RWPE1 (cell line): ENCODE measurements at regions of chr5 and their contacts with region 1.

Region 1: GRCh38 chr5:178058321-178059012 is 54.9 kb upstream of the N4BP3 start:
- DNase-seq: no peak
- H3K27ac ChIP-seq: no peak overlapping the region
- CTCF ChIP-seq: no peak

Region 2: DNA sequence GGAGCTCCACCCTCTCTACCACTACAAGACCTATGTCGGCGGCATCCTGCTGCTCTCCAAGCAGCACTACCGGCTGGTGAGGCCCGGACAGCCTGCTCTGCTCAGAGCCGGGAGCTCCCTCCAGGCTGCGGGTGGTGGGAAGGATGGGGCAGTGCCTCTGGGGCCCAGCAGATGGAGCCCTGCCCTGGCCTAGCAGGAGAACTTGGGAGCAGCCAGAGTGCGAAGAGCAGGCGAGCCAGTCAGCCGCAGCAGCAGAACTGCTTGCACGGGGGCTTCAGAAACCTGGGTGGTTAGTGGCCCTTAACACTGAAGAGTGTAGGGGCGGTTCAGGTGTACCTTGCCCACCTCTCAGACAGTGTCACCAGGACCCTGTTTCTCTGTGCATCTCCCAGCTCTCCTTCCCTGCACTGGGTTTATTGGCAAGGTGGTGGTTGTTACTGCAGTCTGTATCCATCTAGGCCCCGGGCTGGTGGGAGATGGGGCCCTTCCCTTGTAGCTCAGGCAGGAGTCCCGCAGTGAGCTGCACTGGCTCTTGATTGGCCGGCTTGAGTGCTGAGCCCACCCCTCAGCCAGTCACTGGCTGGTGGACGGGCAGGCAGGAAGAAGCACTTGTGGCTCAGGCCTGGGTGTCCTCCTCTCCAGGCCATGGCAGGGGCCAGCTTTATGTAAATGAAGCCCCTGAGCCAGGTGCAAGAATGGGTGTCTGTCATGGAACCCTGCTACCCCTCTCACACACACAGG is 450.8 kb before region 1 on chr5:
- CTCF ChIA-PET with region 1: interaction called, 10 read pairs
- POLR2A ChIA-PET with region 1: no interaction called
- DNase-seq: peak; percentile 86
- H3K27ac ChIP-seq: peak overlapping the region; percentile 2; the same call in 1 of the 2 replicates
- CTCF ChIP-seq: peak; percentile 95

Region 3: DNA sequence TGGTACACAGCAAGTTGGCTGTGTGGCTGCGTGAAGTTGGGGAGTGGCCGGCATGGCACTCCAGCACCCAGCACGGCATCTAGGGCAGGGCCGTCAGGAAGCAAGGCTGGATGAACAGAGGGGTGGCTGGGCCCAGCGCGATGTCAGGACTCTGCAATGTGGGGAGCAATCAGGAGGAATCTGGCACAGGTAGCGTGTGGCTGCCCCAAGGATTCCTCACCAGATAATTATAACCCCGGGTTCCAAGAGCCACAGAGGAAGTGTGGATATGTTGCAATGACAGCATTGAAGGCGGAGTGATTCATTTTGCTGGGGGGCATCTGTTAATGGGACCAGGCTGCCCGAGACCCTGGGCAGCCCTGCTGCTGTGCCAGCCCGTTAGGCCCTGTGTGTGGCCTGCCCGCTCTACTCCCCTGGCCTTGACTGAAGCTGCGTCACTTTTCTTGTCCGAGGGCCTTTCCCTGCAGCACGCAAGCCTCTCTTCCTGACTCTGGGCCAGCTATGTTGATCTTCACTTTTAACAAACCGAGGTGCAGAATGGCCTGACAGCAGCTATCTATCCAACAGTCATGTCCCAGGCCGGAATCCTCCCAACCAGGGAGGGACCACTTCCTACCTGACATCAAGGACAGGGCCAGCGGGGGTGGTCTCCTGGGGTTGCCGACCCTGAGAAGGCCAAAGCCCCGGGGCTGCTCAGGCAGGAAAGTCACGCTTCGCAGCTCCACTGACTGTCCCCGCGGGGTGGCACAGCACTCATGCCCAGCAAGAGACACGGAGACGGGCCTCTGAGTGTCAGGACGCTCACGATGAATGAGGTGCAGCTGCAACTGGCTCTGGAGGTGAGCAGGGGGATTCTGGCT is 292.1 kb after region 1 on chr5:
- CTCF ChIA-PET with region 1: no interaction called
- POLR2A ChIA-PET with region 1: no interaction called
- DNase-seq: peak; percentile 70
- H3K27ac ChIP-seq: peak overlapping the region; percentile 15; the same call in 1 of the 2 replicates
- CTCF ChIP-seq: no peak

Region 4: DNA sequence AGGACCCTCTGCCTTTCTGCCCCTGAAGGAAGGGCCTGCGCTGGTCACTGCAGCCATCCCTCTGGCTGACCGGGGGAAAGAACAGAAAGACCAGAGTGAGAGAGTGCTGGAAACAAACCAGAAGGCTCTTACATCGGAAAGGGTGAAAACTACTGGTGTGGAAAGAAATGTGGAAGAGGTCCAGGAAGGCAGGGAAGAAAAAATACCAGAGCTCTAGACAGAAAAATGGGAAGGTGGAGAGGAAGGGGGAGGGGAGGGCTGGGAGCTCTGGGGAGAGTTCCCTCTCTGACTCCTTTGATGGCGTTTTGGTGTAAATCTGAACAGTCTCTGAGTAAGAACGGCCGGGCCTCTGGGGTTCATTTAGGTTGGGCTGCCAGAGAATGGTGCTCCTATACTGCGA is 484.0 kb after region 1 on chr5:
- CTCF ChIA-PET with region 1: no interaction called
- POLR2A ChIA-PET with region 1: no interaction called
- DNase-seq: no peak
- H3K27ac ChIP-seq: no peak overlapping the region
- CTCF ChIP-seq: no peak